ENCODE measurements at regions of chr1 and their contacts with region 1.

Region 1: GRCh38 chr1:159780583-159781582 is at the start of gene DUSP23:
- DNase-seq: peak; percentile 96
- ATAC-seq: peak; percentile 99
- H3K4me3 ChIP-seq: peak within 1 kb of the TSS; percentile 65 to 66
- H3K27ac ChIP-seq: peak within 1 kb of the TSS; percentile 81
- H3K4me1 ChIP-seq: no peaks in the 10 kb centered on the region
- H3K27me3 ChIP-seq: peaks cover 2% of the 10 kb centered on the region; the same call in 1 of the 2 replicates
- CTCF ChIP-seq: peak; percentile 94
- total RNA-seq, gene DUSP23: 36.1 TPM

Region 2: DNA sequence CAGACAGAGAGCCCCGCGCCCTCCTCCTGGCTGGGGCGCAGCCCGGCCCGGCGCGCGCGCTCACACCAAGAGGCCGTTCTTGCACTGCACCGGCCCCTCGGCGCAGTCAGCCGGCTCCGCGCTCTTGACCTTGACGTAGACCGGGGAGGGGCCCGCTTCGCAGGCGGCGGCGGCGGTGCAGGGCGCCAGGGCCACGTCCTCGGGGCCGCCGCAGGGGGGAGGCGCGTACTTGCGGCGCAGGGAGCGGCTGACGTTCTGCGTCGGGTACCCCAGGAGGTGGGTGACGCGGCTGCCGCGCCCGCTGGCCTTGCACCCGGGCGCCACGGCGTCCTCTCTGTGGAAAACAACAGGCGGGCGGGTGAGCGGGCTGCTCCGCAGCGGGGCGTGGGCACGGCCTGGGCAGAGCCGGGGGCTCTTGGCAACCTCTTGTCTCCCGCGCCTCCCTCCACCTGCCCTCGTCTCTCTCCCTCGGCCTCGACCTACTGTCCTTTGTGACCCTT is 73.9 kb after region 1 on chr1:
- CTCF ChIA-PET with region 1: no interaction called
- POLR2A ChIA-PET with region 1: no interaction called
- in situ Hi-C with region 1: no loop called
- intact Hi-C with region 1: loop called (anchors 2 kb)
- DNase-seq: no peak
- ATAC-seq: peak; percentile 95
- H3K4me3 ChIP-seq: peak overlapping the region; percentile 53 to 57
- H3K27ac ChIP-seq: no peak overlapping the region
- H3K4me1 ChIP-seq: peaks cover 9% of the 10 kb centered on the region; the same call in 1 of the 2 replicates
- H3K27me3 ChIP-seq: no peaks in the 10 kb centered on the region
- CTCF ChIP-seq: no peak